A673 (cell line): ENCODE measurements at regions of chr19 and their contacts with region 1.

Region 1: DNA sequence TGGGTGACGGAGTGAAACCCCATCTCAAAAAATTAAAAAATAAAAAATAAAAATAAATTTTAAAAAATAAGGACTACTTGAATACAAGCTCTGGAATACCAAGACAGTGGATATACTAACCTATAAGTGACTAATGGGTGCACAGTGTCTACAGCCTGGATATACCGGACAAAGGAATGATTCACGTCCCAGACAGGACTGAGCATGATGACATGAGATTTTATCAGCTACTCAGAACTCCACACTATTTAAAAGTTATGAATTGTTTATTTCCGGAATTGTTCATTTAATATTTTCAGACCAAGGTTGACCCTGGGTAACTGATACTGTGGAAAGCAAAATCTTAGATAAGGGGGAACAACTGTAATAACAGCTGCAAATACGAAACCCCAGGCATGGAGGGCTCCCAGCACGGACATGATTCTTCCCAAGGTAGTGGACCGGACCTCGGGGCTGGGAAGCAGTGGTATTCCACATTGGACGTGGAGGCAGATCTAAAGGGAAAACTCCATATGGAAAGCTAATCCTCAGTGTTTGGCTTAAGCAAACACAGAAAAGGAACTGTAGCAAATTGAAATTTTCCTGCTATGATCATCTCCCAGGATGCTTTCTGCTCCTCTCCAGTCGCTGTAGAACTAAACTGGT is 102.6 kb upstream of the TSHZ3 start:
- DNase-seq: no peak
- H3K4me3 ChIP-seq: no peak overlapping the region
- H3K27ac ChIP-seq: no peak overlapping the region
- H3K4me1 ChIP-seq: no peaks in the 10 kb centered on the region
- H3K27me3 ChIP-seq: no peaks in the 10 kb centered on the region
- CTCF ChIP-seq: no peak

Region 2: GRCh38 chr19:31502536-31503170 is 50.8 kb after region 1 on chr19:
- CTCF ChIA-PET with region 1: no interaction called
- POLR2A ChIA-PET with region 1: interaction called, 13 read pairs
- intact Hi-C with region 1: no loop called
- DNase-seq: no peak
- H3K4me3 ChIP-seq: no peak overlapping the region
- H3K27ac ChIP-seq: no peak overlapping the region
- H3K4me1 ChIP-seq: peaks cover 5% of the 10 kb centered on the region
- H3K27me3 ChIP-seq: no peaks in the 10 kb centered on the region
- CTCF ChIP-seq: no peak